Lower leg skin (tissue), 4 donors: ENCODE measurements at regions of chr11 and their contacts with region 1.

Region 1: DNA sequence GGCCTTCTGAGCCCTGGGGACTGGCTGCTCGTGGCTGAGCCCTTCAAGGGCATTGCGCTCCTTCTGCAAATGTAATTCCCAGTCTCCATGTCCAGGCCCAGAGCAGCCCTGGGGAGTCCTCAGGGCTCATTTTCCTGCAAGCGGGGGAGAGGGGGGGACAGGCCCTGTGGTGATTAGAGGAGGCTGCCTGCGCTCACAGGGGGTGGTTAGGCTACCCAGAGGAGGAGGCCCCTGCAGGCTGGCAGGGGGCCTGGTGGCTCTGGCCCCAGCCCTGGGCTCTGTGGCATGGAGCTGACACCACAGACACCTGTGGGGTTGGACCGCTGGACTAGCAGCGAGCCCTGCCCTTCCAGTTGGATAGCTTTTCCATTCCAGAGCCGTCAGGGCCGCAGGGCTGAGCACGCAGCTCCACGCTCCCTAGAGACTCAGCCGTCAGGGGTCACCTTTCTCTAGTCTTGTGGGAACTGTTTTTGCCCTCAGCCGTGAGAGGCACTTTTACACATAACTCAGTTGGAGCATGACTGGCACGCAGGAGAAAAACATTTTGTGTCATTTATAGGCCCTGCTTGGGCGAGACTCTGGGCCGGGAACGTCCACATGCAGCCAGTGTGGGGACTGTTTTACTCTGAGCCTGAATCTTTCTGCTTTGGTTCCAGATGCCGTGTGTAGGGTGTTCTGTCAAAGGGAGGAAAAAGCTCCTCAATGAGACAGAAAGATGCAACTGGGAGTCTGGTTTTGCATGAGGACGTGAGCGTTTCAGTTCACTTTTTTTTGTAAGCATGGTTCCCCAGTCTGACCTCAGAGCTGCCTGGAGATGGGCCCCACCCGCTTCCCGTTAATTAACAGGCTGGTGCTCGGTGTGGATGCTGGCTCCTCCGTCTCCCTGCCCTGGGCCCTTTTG is 58.1 kb downstream of the LRP5 start:
- DNase-seq: no peak
- H3K4me3 ChIP-seq: no peak overlapping the region
- CTCF ChIP-seq: no peak
- POLR2A ChIP-seq: no peak

Region 2: DNA sequence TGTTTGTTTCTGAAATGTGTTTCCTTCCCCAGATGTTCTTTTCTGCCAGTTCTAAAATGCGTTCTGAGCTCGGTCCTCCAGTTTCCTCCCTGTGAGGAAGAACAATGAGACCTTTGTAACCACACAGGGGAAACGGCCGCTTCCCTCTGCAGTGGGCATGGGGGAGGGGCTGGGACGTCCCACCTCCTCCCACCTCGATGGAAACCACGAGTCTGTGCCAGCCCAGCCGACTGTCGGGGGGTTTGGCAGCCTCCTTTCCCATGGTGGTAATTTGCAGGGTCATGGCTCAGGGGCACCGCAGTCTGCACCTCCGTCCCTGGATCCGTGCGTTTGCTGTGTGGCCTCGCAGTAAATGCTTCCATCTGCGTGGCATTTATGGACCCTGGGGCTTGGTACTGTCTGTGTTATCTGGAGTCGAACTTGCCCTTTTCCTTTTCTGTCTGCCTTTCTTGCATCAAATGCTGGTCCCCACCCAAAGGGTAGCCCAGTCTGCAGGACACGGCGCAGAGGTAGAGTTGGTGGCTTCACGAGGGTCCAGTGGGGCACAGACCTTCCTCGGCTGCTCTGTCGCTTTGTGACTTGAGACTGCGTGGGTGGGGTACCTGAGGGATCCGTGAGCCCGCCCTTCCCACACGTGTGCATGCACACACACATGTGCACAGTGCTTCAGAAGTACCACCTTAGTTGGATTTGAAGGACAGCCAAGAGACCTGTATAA is 41.9 kb before region 1 on chr11:
- intact Hi-C with region 1: loop called (anchors 10 kb)
- DNase-seq: no peak
- H3K4me3 ChIP-seq: no peak overlapping the region
- CTCF ChIP-seq: no peak
- POLR2A ChIP-seq: no peak

Region 3: DNA sequence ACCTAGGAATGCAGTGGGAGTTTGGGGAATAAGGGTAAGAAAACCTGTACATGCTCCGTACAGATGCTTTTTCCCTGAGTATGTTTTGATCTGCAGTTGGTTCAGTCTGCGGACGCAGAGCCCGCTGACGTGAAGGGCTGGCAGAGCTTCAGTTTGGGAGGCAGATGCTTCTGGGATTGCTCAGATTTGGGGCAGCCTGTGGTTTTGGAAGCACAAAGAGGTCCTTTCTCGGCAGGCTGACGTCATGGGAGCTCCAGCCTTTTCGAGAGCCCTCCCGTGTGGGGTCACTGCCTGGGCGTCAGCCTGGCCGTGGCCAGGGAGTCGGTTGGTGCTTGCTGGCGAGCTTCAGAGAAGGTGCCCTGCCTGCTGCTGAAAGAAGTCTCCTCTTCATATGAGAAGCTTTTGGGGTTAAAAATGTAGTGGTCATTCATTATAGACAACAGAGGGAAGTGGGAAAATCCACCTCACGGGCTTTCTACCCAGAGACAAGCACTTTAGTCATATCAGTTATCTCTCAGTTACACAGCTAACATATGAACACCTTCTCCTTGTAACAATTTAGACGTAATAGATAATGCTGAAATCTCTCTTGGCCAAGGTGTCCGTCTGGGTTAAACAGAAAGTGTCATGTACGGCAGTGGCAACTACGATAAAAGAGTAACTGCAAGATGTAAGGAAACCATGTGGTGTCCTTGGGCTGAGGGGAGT is 705.1 kb after region 1 on chr11:
- intact Hi-C with region 1: loop called (anchors 10 kb)
- DNase-seq: peak; percentile 56 to 95
- H3K4me3 ChIP-seq: no peak overlapping the region
- CTCF ChIP-seq: no peak
- POLR2A ChIP-seq: no peak